Activated T-helper 1 cell treated with anti-CD3 and anti-CD28 coated beads, Interleukin-12 subunit alpha, Interleukin-12 subunit beta, Interleukin-2, Interleukin-4 antibody, amounts not matched to agents 30 ng/mL and 10 ng/mL and 1 ng/mL, durations not matched to agents 14 hours and 24 hours and 36 hours (primary cell): ENCODE measurements at regions of chr15 and their contacts with region 1.

Region 1: GRCh38 chr15:67762610-67763368 is 62.5 kb upstream of the SKOR1 start:
- DNase-seq: peak; percentile 37
- H3K4me3 Mint-ChIP-seq: peak overlapping the region; percentile 24
- H3K27ac Mint-ChIP-seq: peak overlapping the region; percentile 41
- H3K4me1 Mint-ChIP-seq: peaks cover 46% of the 10 kb centered on the region
- H3K27me3 Mint-ChIP-seq: peaks cover 20% of the 10 kb centered on the region

Region 2: GRCh38 chr15:67331676-67332075 is 431.1 kb before region 1 on chr15:
- intact Hi-C with region 1: no loop called
- DNase-seq: no peak
- H3K4me3 Mint-ChIP-seq: no peak overlapping the region
- H3K27ac Mint-ChIP-seq: no peak overlapping the region
- H3K4me1 Mint-ChIP-seq: peaks cover 4% of the 10 kb centered on the region
- H3K27me3 Mint-ChIP-seq: peaks cover 32% of the 10 kb centered on the region

Region 3: DNA sequence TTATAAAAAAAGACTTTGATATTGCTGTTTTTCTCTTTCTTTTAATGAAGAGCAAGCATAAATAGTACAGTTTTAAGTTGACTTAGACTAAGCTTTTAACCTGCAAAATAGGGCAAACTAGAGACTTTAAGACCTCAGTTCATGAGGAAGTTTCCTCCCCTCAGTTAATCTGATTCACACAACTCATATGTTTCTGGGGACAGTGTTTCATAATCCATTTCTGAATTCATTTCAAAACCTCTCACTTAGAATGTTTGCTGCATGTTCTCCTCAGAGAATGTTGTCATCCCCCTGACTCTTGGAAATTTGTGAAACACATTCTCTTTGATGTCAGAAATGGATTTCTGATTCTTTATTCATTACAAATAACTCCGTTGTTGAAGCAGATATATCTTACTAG is 16.8 kb before region 1 on chr15:
- intact Hi-C with region 1: loop called (anchors 1 kb)
- DNase-seq: no peak
- H3K4me3 Mint-ChIP-seq: peak overlapping the region; percentile 17
- H3K27ac Mint-ChIP-seq: peak overlapping the region; percentile 16
- H3K4me1 Mint-ChIP-seq: peaks cover 49% of the 10 kb centered on the region
- H3K27me3 Mint-ChIP-seq: no peaks in the 10 kb centered on the region